ENCODE measurements at regions of chr13 and their contacts with region 1.

Region 1: GRCh38 chr13:79423801-79424642 is 18.0 kb upstream of the RBM26 start:
- DNase-seq: peak in 1 of 2 donors; percentile 74
- ATAC-seq: peak in 2 of 3 donors; percentile 73 to 77
- H3K4me3 ChIP-seq: no peak overlapping the region
- H3K4me3 Mint-ChIP-seq: no peak overlapping the region
- H3K27ac ChIP-seq: no peak overlapping the region
- H3K27ac Mint-ChIP-seq: no peak overlapping the region
- H3K4me1 ChIP-seq: no peaks in the 10 kb centered on the region
- H3K4me1 Mint-ChIP-seq: no peaks in the 10 kb centered on the region
- H3K27me3 ChIP-seq: no peaks in the 10 kb centered on the region
- H3K27me3 Mint-ChIP-seq: no peaks in the 10 kb centered on the region
- CTCF ChIP-seq: peak; percentile 85

Region 2: GRCh38 chr13:79496188-79496587 is 72.2 kb after region 1 on chr13:
- intact Hi-C with region 1: no loop called
- DNase-seq: no peak
- ATAC-seq: no peak
- H3K4me3 ChIP-seq: no peak overlapping the region
- H3K4me3 Mint-ChIP-seq: no peak overlapping the region
- H3K27ac ChIP-seq: no peak overlapping the region
- H3K27ac Mint-ChIP-seq: no peak overlapping the region
- H3K4me1 ChIP-seq: no peaks in the 10 kb centered on the region
- H3K4me1 Mint-ChIP-seq: peaks cover 5 to 14% of the 10 kb centered on the region in 2 donors
- H3K27me3 ChIP-seq: peaks cover 6% of the 10 kb centered on the region
- H3K27me3 Mint-ChIP-seq: peaks cover 4 to 35% of the 10 kb centered on the region in 2 donors
- CTCF ChIP-seq: no peak

Region 3: GRCh38 chr13:79541426-79542049 is 117.5 kb after region 1 on chr13:
- intact Hi-C with region 1: loop called (anchors 1 kb)
- DNase-seq: peak in 1 of 2 donors; percentile 83
- ATAC-seq: peak; percentile 63 to 77 (median 76)
- H3K4me3 ChIP-seq: no peak overlapping the region
- H3K4me3 Mint-ChIP-seq: no peak overlapping the region
- H3K27ac ChIP-seq: no peak overlapping the region
- H3K27ac Mint-ChIP-seq: no peak overlapping the region
- H3K4me1 ChIP-seq: no peaks in the 10 kb centered on the region
- H3K4me1 Mint-ChIP-seq: no peaks in the 10 kb centered on the region
- H3K27me3 ChIP-seq: no peaks in the 10 kb centered on the region
- H3K27me3 Mint-ChIP-seq: no peaks in the 10 kb centered on the region
- CTCF ChIP-seq: peak; percentile 97